ENCODE measurements at regions of chr1 and their contacts with region 1.

Region 1: DNA sequence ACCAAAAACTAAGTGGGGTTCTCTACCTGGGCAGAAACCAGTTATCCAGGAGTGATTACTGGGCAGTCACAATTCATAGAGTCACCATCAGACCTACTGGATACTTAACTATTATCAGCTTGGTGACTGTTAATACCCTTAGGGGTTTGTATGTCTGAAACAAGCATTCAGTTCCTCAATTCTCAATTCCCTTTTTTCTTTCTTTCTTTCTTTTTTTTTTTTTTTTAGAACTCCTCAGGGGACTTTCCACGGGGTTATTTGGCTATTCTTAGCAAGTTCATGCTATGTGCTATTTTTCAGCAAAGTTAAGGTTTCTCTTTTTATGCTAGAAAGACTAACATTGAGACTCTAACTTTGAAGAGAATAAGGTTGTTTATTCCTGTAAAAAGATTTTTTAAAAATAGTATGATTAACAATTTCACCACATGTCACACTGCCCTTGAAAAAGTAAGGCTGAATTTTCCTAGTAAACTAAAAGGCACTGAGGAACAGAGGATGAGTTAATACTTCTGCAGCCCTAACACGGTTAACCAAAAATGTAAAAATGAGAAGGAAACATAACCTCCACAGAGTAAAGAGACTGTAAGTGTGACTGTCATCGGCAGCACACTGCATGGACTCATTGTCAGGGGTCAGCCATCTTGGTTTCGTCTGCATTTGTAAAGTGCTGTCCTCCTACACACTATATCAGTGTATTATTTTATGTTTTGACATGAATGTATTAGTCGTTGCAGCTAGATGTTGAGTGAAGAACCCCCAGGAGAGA is 310.2 kb downstream of the NTNG1 start:
- DNase-seq: peak; percentile 80
- ATAC-seq: peak; percentile 73
- H3K4me3 ChIP-seq: peak overlapping the region; percentile 12 to 62 (median 35)
- H3K4me3 Mint-ChIP-seq: peak overlapping the region; percentile 84
- H3K27ac ChIP-seq: peak overlapping the region; percentile 91 to 97
- H3K27ac Mint-ChIP-seq: peak overlapping the region; percentile 90
- H3K4me1 ChIP-seq: peaks cover 65 to 73% of the 10 kb centered on the region in 2 donors
- H3K4me1 Mint-ChIP-seq: peaks cover 80% of the 10 kb centered on the region
- H3K27me3 ChIP-seq: no peaks in the 10 kb centered on the region
- H3K27me3 Mint-ChIP-seq: no peaks in the 10 kb centered on the region
- CTCF ChIP-seq: no peak

Region 2: GRCh38 chr1:107056426-107057196 is 394.5 kb before region 1 on chr1 and contains the start of gene PRMT6:
- CTCF ChIA-PET with region 1: no interaction called
- POLR2A ChIA-PET with region 1: no interaction called
- intact Hi-C with region 1: loop called (anchors 2 kb)
- DNase-seq: peak; percentile 87
- ATAC-seq: peak; percentile 91
- H3K4me3 ChIP-seq: peak within 1 kb of the TSS; percentile 73 to 100 (median 78)
- H3K4me3 Mint-ChIP-seq: peak within 1 kb of the TSS; percentile 99
- H3K27ac ChIP-seq: peak within 1 kb of the TSS; percentile 79 to 80
- H3K27ac Mint-ChIP-seq: peak within 1 kb of the TSS; percentile 99
- H3K4me1 ChIP-seq: peaks cover 18 to 21% of the 10 kb centered on the region in 2 donors
- H3K4me1 Mint-ChIP-seq: peaks cover 28% of the 10 kb centered on the region
- H3K27me3 ChIP-seq: no peaks in the 10 kb centered on the region
- H3K27me3 Mint-ChIP-seq: no peaks in the 10 kb centered on the region
- CTCF ChIP-seq: peak; percentile 15
- total RNA-seq, gene PRMT6: 21.6 and 23.3 TPM in 2 replicates

Region 3: DNA sequence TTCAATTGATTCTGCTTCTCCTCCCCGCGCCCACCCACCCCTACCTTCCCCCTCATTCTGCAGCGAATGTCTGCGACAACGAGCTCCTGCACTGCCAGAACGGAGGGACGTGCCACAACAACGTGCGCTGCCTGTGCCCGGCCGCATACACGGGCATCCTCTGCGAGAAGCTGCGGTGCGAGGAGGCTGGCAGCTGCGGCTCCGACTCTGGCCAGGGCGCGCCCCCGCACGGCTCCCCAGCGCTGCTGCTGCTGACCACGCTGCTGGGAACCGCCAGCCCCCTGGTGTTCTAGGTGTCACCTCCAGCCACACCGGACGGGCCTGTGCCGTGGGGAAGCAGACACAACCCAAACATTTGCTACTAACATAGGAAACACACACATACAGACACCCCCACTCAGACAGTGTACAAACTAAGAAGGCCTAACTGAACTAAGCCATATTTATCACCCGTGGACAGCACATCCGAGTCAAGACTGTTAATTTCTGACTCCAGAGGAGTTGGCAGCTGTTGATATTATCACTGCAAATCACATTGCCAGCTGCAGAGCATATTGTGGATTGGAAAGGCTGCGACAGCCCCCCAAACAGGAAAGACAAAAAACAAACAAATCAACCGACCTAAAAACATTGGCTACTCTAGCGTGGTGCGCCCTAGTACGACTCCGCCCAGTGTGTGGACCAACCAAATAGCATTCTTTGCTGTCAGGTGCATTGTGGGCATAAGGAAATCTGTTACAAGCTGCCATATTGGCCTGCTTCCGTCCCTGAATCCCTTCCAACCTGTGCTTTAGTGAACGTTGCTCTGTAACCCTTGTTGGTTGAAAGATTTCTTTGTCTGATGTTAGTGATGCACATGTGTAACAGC is 29.7 kb after region 1 on chr1:
- CTCF ChIA-PET with region 1: interaction called, 8 read pairs
- POLR2A ChIA-PET with region 1: no interaction called
- intact Hi-C with region 1: loop called (anchors 2 kb)
- DNase-seq: peak; percentile 66
- ATAC-seq: peak; percentile 90
- H3K4me3 ChIP-seq: peak overlapping the region in 4 of 5 experiments; percentile 7 to 53 (median 42)
- H3K4me3 Mint-ChIP-seq: peak overlapping the region; percentile 89
- H3K27ac ChIP-seq: no peak overlapping the region
- H3K27ac Mint-ChIP-seq: no peak overlapping the region
- H3K4me1 ChIP-seq: peaks cover 8 to 12% of the 10 kb centered on the region in 2 donors
- H3K4me1 Mint-ChIP-seq: peaks cover 12% of the 10 kb centered on the region
- H3K27me3 ChIP-seq: peaks cover 0 to 3% (median 0%) of the 10 kb centered on the region in 4 experiments
- H3K27me3 Mint-ChIP-seq: no peaks in the 10 kb centered on the region
- CTCF ChIP-seq: peak; percentile 28